Ascending aorta (tissue), 2 donors: ENCODE measurements at regions of chr20 and their contacts with region 1.

Region 1: GRCh38 chr20:31547017-31547675 is 32.9 kb downstream of the HM13 start:
- DNase-seq: peak; percentile 47 to 89
- H3K4me3 ChIP-seq: peak overlapping the region; percentile 43 to 60
- H3K27ac ChIP-seq: peak overlapping the region; percentile 75 to 84
- H3K4me1 ChIP-seq: no peaks in the 10 kb centered on the region
- H3K27me3 ChIP-seq: no peaks in the 10 kb centered on the region
- CTCF ChIP-seq: peak in 1 of 3 experiments; percentile 14

Region 2: GRCh38 chr20:31514159-31515071 is 32.7 kb before region 1 on chr20 and contains the start of gene HM13:
- intact Hi-C with region 1: loop called (anchors 2 kb)
- DNase-seq: peak; percentile 67 to 96
- H3K4me3 ChIP-seq: peak within 1 kb of the TSS; percentile 85 to 96
- H3K27ac ChIP-seq: peak within 1 kb of the TSS; percentile 72 to 87
- H3K4me1 ChIP-seq: peaks cover 18 to 29% of the 10 kb centered on the region in 2 donors
- H3K27me3 ChIP-seq: no peaks in the 10 kb centered on the region
- CTCF ChIP-seq: peak; percentile 91 to 98 (median 94)
- total RNA-seq, gene HM13: 84.9 TPM